HepG2 (cell line): ENCODE measurements at regions of chr1 and their contacts with region 1.

Region 1: DNA sequence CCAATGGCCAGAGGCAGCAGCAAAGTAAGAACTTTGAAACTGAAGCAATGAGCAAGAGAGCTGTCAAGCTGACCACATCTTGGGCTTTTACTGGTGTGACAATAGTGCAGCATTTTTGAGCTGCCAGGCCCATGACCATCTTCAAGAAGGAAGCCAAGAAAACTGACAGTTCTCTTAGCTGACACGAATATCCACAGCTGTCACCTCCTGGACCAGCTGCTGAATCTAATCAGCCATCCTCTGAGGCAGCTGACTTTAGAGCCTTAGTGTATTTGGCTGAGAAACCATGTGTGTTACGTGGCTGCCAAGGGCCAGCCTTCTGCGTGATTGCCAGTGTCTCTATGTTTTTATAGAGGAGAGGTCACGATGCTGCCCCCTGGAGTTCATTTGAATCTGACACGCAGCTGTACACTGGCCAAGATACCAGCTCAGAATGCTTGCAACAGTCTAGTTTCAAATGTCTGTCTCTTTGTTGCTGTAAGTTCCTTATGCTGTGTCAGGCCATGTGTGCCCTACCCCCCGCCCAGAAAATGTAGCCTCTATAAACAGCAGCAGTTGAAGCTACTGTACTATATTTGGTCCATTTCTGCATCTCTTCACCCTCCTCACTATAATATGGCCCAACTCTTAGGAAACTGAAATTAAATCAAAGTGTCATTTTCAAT is 39.7 kb downstream of the PALMD start:
- DNase-seq: peak; percentile 53
- ATAC-seq: peak; percentile 97
- H3K4me3 ChIP-seq: no peak overlapping the region
- H3K27ac ChIP-seq: no peak overlapping the region
- H3K4me1 ChIP-seq: no peaks in the 10 kb centered on the region
- H3K27me3 ChIP-seq: no peaks in the 10 kb centered on the region
- CTCF ChIP-seq: peak; percentile 73
- EP300 ChIP-seq: no peak
- POLR2A ChIP-seq: no peak
- RAD21 ChIP-seq: peak; percentile 61

Region 2: DNA sequence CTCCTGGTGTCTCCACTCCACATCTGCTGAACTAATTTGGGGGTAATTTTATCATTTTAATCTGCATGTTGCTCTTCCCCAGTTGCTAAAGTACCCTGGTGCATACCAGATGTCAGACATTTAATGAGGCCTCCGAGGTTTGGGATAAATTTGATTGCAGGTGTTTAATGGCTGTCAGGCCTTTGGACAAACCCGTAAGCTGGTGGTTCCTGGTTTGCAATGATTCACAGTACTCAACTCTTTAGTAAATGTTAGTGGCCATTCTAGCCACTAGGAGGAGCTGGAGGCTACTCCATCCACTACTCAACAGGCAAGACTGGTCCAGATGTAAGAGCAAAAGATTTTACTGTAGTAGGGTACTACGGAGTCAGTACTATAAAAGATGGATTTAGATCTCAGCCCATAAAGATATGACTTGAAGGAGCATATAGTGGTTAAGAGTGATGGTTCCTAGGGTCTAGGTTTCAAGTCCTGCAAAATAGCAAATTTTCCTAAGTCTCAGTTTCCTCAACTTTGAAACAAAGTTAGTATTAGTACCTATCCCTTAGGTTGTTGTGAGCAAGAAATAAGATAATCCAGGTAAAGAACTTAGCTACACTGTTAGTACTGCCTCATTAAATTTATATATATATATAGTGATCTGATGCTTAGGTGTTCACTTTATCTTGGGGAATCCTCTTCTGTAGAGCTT is 891.3 kb before region 1 on chr1:
- CTCF ChIA-PET with region 1: no interaction called
- POLR2A ChIA-PET with region 1: no interaction called
- in situ Hi-C with region 1: no loop called
- intact Hi-C with region 1: loop called (anchors 2 kb)
- DNase-seq: peak; percentile 42
- ATAC-seq: peak; percentile 94
- H3K4me3 ChIP-seq: no peak overlapping the region
- H3K27ac ChIP-seq: no peak overlapping the region
- H3K4me1 ChIP-seq: no peaks in the 10 kb centered on the region
- H3K27me3 ChIP-seq: no peaks in the 10 kb centered on the region
- CTCF ChIP-seq: peak; percentile 74
- EP300 ChIP-seq: no peak
- POLR2A ChIP-seq: no peak
- RAD21 ChIP-seq: 0 out of 2 replicates have a peak, but pooled peaks have one; percentile 18

Region 3: DNA sequence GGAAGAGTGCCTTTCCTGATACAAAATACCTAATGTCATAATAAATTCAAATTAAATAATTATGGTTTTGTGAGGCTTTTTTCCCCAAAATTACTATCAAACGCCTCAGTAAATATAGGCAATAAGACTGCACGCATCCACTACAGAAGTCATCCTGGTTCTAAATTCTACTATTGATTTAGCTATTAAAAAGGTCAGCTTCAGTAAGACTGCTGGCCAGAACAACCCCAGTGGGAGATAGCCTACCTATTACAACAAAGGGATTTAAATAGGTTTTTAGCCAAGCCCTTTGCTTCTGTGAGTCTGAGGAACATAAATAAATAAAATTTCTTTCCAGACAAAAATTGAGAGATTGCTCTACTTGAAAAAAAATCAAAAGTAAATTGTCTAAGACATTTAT is 289.3 kb before region 1 on chr1:
- CTCF ChIA-PET with region 1: no interaction called
- POLR2A ChIA-PET with region 1: no interaction called
- in situ Hi-C with region 1: no loop called
- intact Hi-C with region 1: no loop called
- DNase-seq: no peak
- ATAC-seq: no peak
- H3K4me3 ChIP-seq: no peak overlapping the region
- H3K27ac ChIP-seq: no peak overlapping the region
- H3K4me1 ChIP-seq: no peaks in the 10 kb centered on the region
- H3K27me3 ChIP-seq: 0 out of 5 replicates have a peak, but pooled peaks cover 0 to 8% of the 10 kb centered on the region in 2 experiments
- CTCF ChIP-seq: no peak
- EP300 ChIP-seq: no peak
- POLR2A ChIP-seq: no peak
- RAD21 ChIP-seq: no peak

Region 4: GRCh38 chr1:99406656-99407417 is 278.8 kb before region 1 on chr1:
- CTCF ChIA-PET with region 1: no interaction called
- POLR2A ChIA-PET with region 1: no interaction called
- in situ Hi-C with region 1: no loop called
- intact Hi-C with region 1: loop called (anchors 1 kb)
- DNase-seq: no peak
- ATAC-seq: peak; percentile 51
- H3K4me3 ChIP-seq: no peak overlapping the region
- H3K27ac ChIP-seq: no peak overlapping the region
- H3K4me1 ChIP-seq: peaks cover 10% of the 10 kb centered on the region; the same call in 1 of the 2 replicates
- H3K27me3 ChIP-seq: no peaks in the 10 kb centered on the region
- CTCF ChIP-seq: peak; percentile 34
- EP300 ChIP-seq: no peak
- POLR2A ChIP-seq: no peak
- RAD21 ChIP-seq: no peak

Region 5: DNA sequence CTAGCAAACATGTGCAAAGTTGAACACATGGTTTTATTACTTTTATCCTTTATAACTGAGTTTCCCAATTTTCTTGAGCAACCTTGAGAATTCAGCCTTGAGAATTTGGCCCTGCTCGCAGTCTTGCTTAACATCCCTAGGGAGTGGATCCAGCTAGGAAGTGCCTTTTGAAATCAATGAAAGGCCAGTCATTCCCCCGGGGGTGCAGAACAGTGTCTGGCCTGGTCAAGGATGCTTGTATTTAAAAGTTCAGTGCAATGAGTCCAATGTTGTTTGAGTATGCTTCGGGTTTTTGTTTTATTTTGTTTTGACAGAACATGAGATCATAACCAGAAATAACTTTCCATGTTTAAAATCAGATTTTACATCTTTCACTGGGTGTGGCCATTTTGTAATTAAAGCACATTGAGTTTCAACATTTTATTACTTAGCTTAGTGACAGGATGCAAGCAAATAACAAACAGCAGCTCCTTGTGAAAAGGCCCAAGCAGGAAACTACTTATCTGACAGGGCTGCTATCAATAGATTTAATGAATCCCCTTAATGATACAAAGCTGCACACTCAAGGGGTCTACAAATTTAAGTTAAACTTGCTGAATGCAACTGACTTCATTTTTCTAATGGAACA is 23.0 kb before region 1 on chr1:
- CTCF ChIA-PET with region 1: no interaction called
- POLR2A ChIA-PET with region 1: no interaction called
- in situ Hi-C with region 1: no loop called
- intact Hi-C with region 1: no loop called
- DNase-seq: no peak
- ATAC-seq: peak; percentile 54
- H3K4me3 ChIP-seq: no peak overlapping the region
- H3K27ac ChIP-seq: no peak overlapping the region
- H3K4me1 ChIP-seq: peaks cover 15% of the 10 kb centered on the region
- H3K27me3 ChIP-seq: no peaks in the 10 kb centered on the region
- CTCF ChIP-seq: no peak
- EP300 ChIP-seq: no peak
- POLR2A ChIP-seq: no peak
- RAD21 ChIP-seq: no peak